ENCODE measurements at regions of chr10 and their contacts with region 1.

Region 1: GRCh38 chr10:79195091-79195923 is 126.5 kb downstream of the ZMIZ1 start:
- DNase-seq: peak; percentile 88
- ATAC-seq: peak; percentile 76
- H3K4me3 Mint-ChIP-seq: no peak overlapping the region
- H3K27ac Mint-ChIP-seq: no peak overlapping the region
- H3K4me1 Mint-ChIP-seq: peaks cover 12% of the 10 kb centered on the region
- H3K27me3 Mint-ChIP-seq: no peaks in the 10 kb centered on the region
- CTCF ChIP-seq: peak; percentile 95

Region 2: DNA sequence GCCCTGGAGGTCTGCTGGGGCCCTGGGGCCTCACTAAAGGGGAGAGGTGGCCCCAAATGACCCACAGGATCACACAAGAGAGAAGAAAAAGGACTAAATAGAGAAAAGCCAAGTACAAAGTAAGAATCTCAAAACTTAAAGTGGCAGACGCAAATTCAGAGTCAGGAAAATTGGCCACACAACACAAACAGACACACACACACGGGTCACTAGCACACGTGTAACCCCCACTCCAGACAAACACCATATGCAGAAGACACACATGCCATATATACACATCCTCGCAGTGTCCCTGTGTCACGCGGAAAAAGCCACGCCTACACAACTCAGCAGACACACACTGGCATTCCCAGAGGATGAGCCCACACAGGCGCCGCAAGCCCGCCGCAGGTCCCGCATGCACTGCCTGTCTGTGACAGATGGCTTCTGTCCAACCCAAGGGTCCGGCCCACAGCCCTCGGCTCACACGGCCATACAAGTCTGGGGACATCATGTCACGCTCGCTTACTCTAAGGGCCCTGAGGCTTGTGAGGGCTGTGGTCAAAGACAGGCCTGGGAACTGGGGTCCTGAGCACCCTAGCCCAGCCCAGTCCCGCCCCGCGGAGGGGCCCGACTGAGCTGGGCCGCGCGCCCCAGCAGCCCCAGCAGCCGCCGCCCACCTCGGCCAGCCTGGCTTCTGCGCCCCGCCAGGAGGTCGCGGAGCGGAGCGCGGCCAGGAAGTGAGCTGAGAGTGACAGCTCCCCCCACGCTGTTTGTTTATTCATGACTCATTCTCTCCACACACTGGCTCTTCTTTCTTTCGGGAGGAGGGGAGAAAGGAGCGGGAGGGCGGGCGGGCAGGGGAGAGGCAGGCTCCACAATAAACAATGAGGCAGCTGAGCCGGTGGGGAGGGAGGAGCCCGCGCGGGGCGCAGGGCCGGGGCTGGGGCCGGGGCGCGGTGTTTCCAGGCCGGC is 222.1 kb before region 1 on chr10:
- CTCF ChIA-PET with region 1: interaction called, 28 read pairs
- POLR2A ChIA-PET with region 1: interaction called, 3 read pairs
- DNase-seq: peak; percentile 71
- ATAC-seq: peak; percentile 35
- H3K4me3 Mint-ChIP-seq: peak overlapping the region; percentile 68
- H3K27ac Mint-ChIP-seq: peak overlapping the region; percentile 58
- H3K4me1 Mint-ChIP-seq: peaks cover 38% of the 10 kb centered on the region
- H3K27me3 Mint-ChIP-seq: no peaks in the 10 kb centered on the region; the same call in 1 of the 2 replicates
- CTCF ChIP-seq: no peak

Region 3: GRCh38 chr10:79079490-79080355 is 115.6 kb before region 1 on chr10:
- CTCF ChIA-PET with region 1: interaction called, 12 read pairs
- POLR2A ChIA-PET with region 1: interaction called, 6 read pairs
- DNase-seq: no peak
- ATAC-seq: no peak
- H3K4me3 Mint-ChIP-seq: no peak overlapping the region
- H3K27ac Mint-ChIP-seq: no peak overlapping the region
- H3K4me1 Mint-ChIP-seq: peaks cover 72% of the 10 kb centered on the region
- H3K27me3 Mint-ChIP-seq: no peaks in the 10 kb centered on the region
- CTCF ChIP-seq: no peak

Region 4: GRCh38 chr10:79127151-79127961 is 68.0 kb before region 1 on chr10:
- CTCF ChIA-PET with region 1: interaction called, 21 read pairs
- POLR2A ChIA-PET with region 1: no interaction called
- DNase-seq: no peak
- ATAC-seq: peak; percentile 33
- H3K4me3 Mint-ChIP-seq: no peak overlapping the region
- H3K27ac Mint-ChIP-seq: peak overlapping the region; percentile 93
- H3K4me1 Mint-ChIP-seq: peaks cover 65% of the 10 kb centered on the region
- H3K27me3 Mint-ChIP-seq: no peaks in the 10 kb centered on the region
- CTCF ChIP-seq: no peak

Region 5: GRCh38 chr10:79155301-79156081 is 39.8 kb before region 1 on chr10:
- CTCF ChIA-PET with region 1: interaction called, 24 read pairs
- POLR2A ChIA-PET with region 1: interaction called, 4 read pairs
- DNase-seq: no peak
- ATAC-seq: no peak
- H3K4me3 Mint-ChIP-seq: no peak overlapping the region
- H3K27ac Mint-ChIP-seq: peak overlapping the region; percentile 93
- H3K4me1 Mint-ChIP-seq: peaks cover 55% of the 10 kb centered on the region
- H3K27me3 Mint-ChIP-seq: no peaks in the 10 kb centered on the region
- CTCF ChIP-seq: no peak

Region 6: DNA sequence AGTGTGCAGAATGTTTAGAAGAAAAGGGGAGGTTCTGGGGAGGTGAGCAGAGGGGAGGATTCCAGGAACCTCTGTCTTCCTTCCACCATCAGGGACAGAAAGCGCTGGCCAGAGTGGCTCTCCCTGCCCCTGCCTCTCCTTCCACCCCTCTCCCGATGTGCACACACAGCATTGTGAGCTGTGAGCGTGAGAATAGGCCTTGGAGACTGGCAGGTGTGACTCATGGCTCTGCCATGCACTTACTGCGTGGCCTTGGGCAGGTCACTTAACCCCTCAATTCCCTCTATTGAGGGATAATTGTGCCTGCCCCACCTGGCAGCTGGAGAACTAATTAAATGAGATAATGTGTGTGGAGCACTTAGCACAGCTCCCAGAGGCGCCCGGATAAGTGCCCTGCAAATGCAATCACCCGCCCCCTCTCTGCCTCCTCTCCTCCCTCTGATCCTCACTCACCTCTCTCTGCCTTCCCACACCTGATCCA is 11.1 kb before region 1 on chr10:
- CTCF ChIA-PET with region 1: interaction called, 31 read pairs
- POLR2A ChIA-PET with region 1: no interaction called
- DNase-seq: no peak
- ATAC-seq: peak; percentile 18; the same call in 1 of the 2 replicates
- H3K4me3 Mint-ChIP-seq: no peak overlapping the region
- H3K27ac Mint-ChIP-seq: peak overlapping the region; percentile 15; the same call in 1 of the 2 replicates
- H3K4me1 Mint-ChIP-seq: peaks cover 50% of the 10 kb centered on the region
- H3K27me3 Mint-ChIP-seq: no peaks in the 10 kb centered on the region
- CTCF ChIP-seq: no peak

Measured in WTC11 (cell line).